Caco-2 (cell line): ENCODE measurements at regions of chr6 and their contacts with region 1.

Region 1: DNA sequence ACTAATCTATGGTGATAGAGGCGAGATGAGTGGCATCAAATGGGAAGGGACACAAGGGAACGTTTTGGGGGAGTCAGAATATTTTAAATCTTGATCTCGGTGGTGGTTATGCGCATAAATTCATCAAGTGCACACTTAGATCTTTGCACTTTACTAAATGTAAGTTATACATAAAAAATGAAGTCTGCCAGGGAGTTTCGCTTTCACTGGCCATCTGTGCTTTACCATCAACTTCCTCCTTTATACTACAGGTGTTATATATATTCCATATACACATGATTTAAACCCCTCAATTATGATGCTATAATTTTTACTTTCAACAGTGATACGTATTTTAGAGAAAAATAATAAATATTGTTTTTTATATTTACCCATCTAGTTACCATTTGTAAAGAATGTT is 97.6 kb upstream of the AKIRIN2 start:
- DNase-seq: no peak
- H3K4me3 ChIP-seq: no peak overlapping the region
- H3K4me3 Mint-ChIP-seq: peak overlapping the region; percentile 8
- H3K27ac Mint-ChIP-seq: peak overlapping the region; percentile 63
- H3K4me1 ChIP-seq: peaks cover 20% of the 10 kb centered on the region
- H3K4me1 Mint-ChIP-seq: peaks cover 35% of the 10 kb centered on the region
- H3K27me3 ChIP-seq: no peaks in the 10 kb centered on the region
- H3K27me3 Mint-ChIP-seq: no peaks in the 10 kb centered on the region
- CTCF ChIP-seq: no peak

Region 2: GRCh38 chr6:87393022-87393622 is 406.5 kb before region 1 on chr6:
- CTCF ChIA-PET with region 1: no interaction called
- POLR2A ChIA-PET with region 1: no interaction called
- intact Hi-C with region 1: loop called (anchors 5 kb)
- DNase-seq: peak in 1 of 2 experiments; percentile 52
- H3K4me3 ChIP-seq: no peak overlapping the region
- H3K4me3 Mint-ChIP-seq: no peak overlapping the region
- H3K27ac Mint-ChIP-seq: no peak overlapping the region
- H3K4me1 ChIP-seq: no peaks in the 10 kb centered on the region
- H3K4me1 Mint-ChIP-seq: no peaks in the 10 kb centered on the region
- H3K27me3 ChIP-seq: no peaks in the 10 kb centered on the region
- H3K27me3 Mint-ChIP-seq: no peaks in the 10 kb centered on the region
- CTCF ChIP-seq: peak; percentile 63 to 64

Region 3: GRCh38 chr6:87589693-87590549 is 209.7 kb before region 1 on chr6 and contains the starts of genes ORC3 and RARS2:
- CTCF ChIA-PET with region 1: no interaction called
- POLR2A ChIA-PET with region 1: no interaction called
- intact Hi-C with region 1: loop called (anchors 5 kb)
- DNase-seq: peak; percentile 96
- H3K4me3 ChIP-seq: peak within 1 kb of the TSS; percentile 73
- H3K4me3 Mint-ChIP-seq: peak within 1 kb of the TSS; percentile 93
- H3K27ac Mint-ChIP-seq: peak within 1 kb of the TSS; percentile 91
- H3K4me1 ChIP-seq: peaks cover 18% of the 10 kb centered on the region
- H3K4me1 Mint-ChIP-seq: peaks cover 15% of the 10 kb centered on the region
- H3K27me3 ChIP-seq: no peaks in the 10 kb centered on the region
- H3K27me3 Mint-ChIP-seq: no peaks in the 10 kb centered on the region
- CTCF ChIP-seq: no peak
- total RNA-seq, gene ORC3: 33.8 and 34.5 TPM in 2 replicates
- total RNA-seq, gene RARS2: 32.0 and 37.4 TPM in 2 replicates

Region 4: DNA sequence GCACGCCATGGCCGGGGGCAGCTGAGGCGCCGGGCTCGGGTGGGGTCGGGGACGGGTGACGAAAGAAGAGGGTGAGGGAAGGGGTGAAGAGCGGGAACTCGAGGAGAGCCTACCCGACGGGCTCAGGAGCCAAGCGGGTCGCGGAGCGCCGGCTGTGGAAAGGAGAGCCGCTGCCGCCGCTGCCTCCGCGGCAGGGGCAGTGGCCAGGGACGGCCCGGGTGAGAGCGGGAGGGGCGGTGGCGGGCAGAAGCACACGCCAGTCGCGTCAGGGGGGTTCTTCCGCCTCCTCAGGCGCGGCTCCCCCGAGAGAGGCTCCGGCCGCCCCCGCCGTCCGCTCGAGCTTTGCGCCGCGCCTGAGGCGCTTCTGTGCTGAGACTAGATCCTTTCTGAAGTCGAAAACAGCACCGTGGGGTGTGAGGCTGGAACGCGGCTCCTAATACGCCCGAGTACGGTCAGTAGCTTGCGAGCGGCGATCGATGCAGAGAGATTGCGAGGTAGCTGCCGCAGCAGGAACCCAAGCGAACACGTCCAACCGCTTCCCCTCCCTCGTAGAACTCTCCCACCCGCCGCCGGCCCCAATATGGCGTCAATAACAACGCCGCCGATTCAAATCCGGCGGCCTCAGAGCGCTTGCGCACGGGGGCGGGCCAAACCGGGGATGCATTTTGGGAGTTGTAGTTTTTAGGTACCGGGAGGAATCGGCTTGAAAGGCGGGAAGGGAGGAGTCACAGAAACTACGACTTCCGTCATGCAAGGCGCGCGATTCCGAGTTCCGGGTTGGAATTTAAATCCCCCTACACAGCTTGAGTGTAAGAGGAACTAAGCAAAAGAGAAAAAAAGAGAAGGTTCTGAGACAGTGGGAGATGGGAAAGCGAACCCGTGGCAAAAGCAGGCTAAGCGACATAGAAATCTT is 97.7 kb before region 1 on chr6 and contains the start of gene AKIRIN2:
- CTCF ChIA-PET with region 1: no interaction called
- POLR2A ChIA-PET with region 1: no interaction called
- intact Hi-C with region 1: loop called (anchors 2 kb)
- DNase-seq: peak; percentile 96 to 97
- H3K4me3 ChIP-seq: peak within 1 kb of the TSS; percentile 60
- H3K4me3 Mint-ChIP-seq: peak within 1 kb of the TSS; percentile 99
- H3K27ac Mint-ChIP-seq: peak within 1 kb of the TSS; percentile 93
- H3K4me1 ChIP-seq: peaks cover 9% of the 10 kb centered on the region
- H3K4me1 Mint-ChIP-seq: peaks cover 9% of the 10 kb centered on the region
- H3K27me3 ChIP-seq: no peaks in the 10 kb centered on the region
- H3K27me3 Mint-ChIP-seq: no peaks in the 10 kb centered on the region
- CTCF ChIP-seq: no peak
- total RNA-seq, gene AKIRIN2: 51.3 and 53.5 TPM in 2 replicates

Region 5: GRCh38 chr6:87822011-87822410 is 22.4 kb after region 1 on chr6:
- CTCF ChIA-PET with region 1: no interaction called
- POLR2A ChIA-PET with region 1: no interaction called
- intact Hi-C with region 1: loop called (anchors 1 kb)
- DNase-seq: peak in 1 of 2 experiments; percentile 19
- H3K4me3 ChIP-seq: no peak overlapping the region
- H3K4me3 Mint-ChIP-seq: no peak overlapping the region
- H3K27ac Mint-ChIP-seq: no peak overlapping the region
- H3K4me1 ChIP-seq: peaks cover 12% of the 10 kb centered on the region
- H3K4me1 Mint-ChIP-seq: peaks cover 9% of the 10 kb centered on the region
- H3K27me3 ChIP-seq: no peaks in the 10 kb centered on the region
- H3K27me3 Mint-ChIP-seq: no peaks in the 10 kb centered on the region
- CTCF ChIP-seq: no peak

Region 6: DNA sequence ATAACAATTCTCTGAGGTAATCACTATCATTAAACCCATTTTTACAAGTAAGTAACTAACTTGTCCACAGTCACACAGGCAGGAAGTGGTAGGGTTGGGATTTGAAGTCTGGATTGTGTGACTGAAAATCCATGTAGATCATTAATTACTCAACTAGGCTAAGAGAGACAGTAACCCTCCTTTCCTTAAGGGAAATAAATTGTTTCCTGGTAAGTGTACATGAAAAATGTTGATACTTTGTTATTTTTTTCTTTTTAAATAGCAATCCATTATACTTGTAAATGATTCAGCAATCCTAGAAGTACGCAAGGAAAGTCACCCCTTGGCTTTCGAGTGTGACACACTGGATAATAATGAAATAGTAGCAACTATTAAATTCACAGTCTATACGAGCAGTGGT is 259.5 kb after region 1 on chr6:
- CTCF ChIA-PET with region 1: no interaction called
- POLR2A ChIA-PET with region 1: no interaction called
- intact Hi-C with region 1: no loop called
- DNase-seq: no peak
- H3K4me3 ChIP-seq: no peak overlapping the region
- H3K4me3 Mint-ChIP-seq: no peak overlapping the region
- H3K27ac Mint-ChIP-seq: no peak overlapping the region
- H3K4me1 ChIP-seq: no peaks in the 10 kb centered on the region
- H3K4me1 Mint-ChIP-seq: no peaks in the 10 kb centered on the region
- H3K27me3 ChIP-seq: no peaks in the 10 kb centered on the region
- H3K27me3 Mint-ChIP-seq: peaks cover 7% of the 10 kb centered on the region
- CTCF ChIP-seq: no peak